ENCODE measurements at regions of chr16 and their contacts with region 1.

Region 1: DNA sequence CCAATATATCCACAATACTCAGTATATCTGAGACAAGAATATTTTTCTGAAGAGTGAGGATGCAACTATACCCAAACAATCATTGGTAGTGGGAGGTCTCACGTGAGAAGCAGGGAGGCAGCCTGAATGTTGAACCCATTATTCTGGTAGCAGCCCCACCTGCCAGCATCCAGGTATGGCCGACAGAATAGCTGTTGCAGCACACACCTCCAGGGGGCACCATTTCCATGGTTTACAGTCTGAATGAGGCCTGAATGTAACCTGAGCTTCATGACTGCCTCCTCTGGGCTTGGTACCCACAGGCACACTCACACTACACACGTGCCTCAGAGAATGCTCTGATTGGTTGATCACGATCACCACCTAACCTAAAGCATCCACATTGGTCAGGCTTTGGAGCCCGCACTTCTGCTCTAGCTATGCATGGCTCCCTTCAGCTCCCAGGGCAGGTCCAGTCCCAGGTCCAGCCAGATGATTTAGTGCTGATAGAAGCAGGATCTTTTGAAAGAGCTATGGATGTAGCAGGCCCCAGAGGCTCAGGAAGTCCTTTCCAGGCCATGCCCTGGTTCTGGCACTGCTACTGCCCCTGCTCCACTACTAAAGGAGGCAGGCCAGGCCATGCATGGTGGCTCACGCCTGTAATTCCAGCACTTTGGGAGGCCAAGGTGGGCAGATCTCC is 11.0 kb upstream of the CBFB start:
- DNase-seq: peak; percentile 80
- ATAC-seq: peak; percentile 74
- H3K4me3 ChIP-seq: no peak overlapping the region
- H3K4me3 Mint-ChIP-seq: no peak overlapping the region
- H3K27ac ChIP-seq: no peak overlapping the region
- H3K27ac Mint-ChIP-seq: no peak overlapping the region
- H3K4me1 ChIP-seq: peaks cover 12 to 13% of the 10 kb centered on the region in 2 donors
- H3K4me1 Mint-ChIP-seq: peaks cover 2% of the 10 kb centered on the region
- H3K27me3 ChIP-seq: peaks cover 0 to 15% (median 7%) of the 10 kb centered on the region in 4 experiments
- H3K27me3 Mint-ChIP-seq: peaks cover 5% of the 10 kb centered on the region
- CTCF ChIP-seq: peak; percentile 53

Region 2: DNA sequence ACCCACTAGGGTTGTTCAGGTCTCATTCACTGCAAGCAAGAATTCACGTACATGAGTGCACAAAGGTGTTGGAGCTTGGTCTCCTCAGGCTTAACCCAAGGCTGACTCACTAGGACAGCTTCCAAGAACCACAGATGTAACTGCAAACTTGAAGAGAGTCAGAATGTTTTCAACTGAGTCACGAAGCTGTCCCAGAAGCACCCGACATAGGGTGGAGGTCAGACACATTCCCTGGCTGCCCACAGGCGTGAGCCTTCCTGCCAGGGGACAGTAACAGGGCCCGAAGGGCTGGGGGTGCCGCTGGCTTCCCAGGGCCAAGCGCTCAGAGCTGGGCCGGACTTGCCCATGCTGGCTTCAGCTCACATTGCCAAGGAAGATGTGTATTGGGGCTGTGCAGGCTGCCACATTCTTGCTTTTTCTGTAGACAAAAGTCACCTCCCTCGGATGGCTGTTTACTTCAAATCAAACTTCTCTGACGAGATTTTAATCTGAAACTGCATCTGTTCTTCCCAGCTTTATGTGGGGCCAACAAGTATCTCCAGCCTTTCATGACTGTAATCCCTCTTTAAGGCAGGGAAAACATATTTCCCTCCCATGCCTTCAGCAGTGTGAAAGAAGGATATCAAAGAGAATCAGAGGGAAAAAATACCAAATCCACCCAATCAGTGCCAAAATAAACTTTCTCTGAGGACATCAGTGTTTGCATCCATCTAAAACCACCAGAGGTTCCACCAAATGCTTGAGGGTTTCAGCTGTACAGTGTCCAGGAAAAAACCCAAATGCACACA is 399.2 kb before region 1 on chr16:
- CTCF ChIA-PET with region 1: no interaction called
- POLR2A ChIA-PET with region 1: no interaction called
- intact Hi-C with region 1: no loop called
- DNase-seq: no peak
- ATAC-seq: no peak
- H3K4me3 ChIP-seq: no peak overlapping the region
- H3K4me3 Mint-ChIP-seq: no peak overlapping the region
- H3K27ac ChIP-seq: no peak overlapping the region
- H3K27ac Mint-ChIP-seq: no peak overlapping the region
- H3K4me1 ChIP-seq: no peaks in the 10 kb centered on the region
- H3K4me1 Mint-ChIP-seq: no peaks in the 10 kb centered on the region
- H3K27me3 ChIP-seq: peaks cover 0 to 9% (median 5%) of the 10 kb centered on the region in 4 experiments
- H3K27me3 Mint-ChIP-seq: peaks cover 40% of the 10 kb centered on the region
- CTCF ChIP-seq: no peak

Region 3: GRCh38 chr16:67028555-67029248 is 10.8 kb after region 1 on chr16 and contains the start of gene CBFB:
- CTCF ChIA-PET with region 1: interaction called, 10 read pairs
- POLR2A ChIA-PET with region 1: interaction called, 4 read pairs
- intact Hi-C with region 1: loop called (anchors 2 kb)
- DNase-seq: peak; percentile 97
- ATAC-seq: peak; percentile 83
- H3K4me3 ChIP-seq: peak within 1 kb of the TSS; percentile 69 to 82 (median 76)
- H3K4me3 Mint-ChIP-seq: peak within 1 kb of the TSS; percentile 94
- H3K27ac ChIP-seq: peak within 1 kb of the TSS; percentile 96 to 98
- H3K27ac Mint-ChIP-seq: peak within 1 kb of the TSS; percentile 94
- H3K4me1 ChIP-seq: peaks cover 13 to 18% of the 10 kb centered on the region in 2 donors
- H3K4me1 Mint-ChIP-seq: peaks cover 40% of the 10 kb centered on the region
- H3K27me3 ChIP-seq: no peaks in the 10 kb centered on the region
- H3K27me3 Mint-ChIP-seq: no peaks in the 10 kb centered on the region
- CTCF ChIP-seq: peak; percentile 21
- total RNA-seq, gene CBFB: 89.0 and 101 TPM in 2 replicates

Region 4: GRCh38 chr16:67100569-67101310 is 82.8 kb after region 1 on chr16:
- CTCF ChIA-PET with region 1: interaction called, 14 read pairs
- POLR2A ChIA-PET with region 1: no interaction called
- intact Hi-C with region 1: loop called (anchors 2 kb)
- DNase-seq: peak; percentile 34
- ATAC-seq: no peak
- H3K4me3 ChIP-seq: no peak overlapping the region
- H3K4me3 Mint-ChIP-seq: no peak overlapping the region
- H3K27ac ChIP-seq: no peak overlapping the region
- H3K27ac Mint-ChIP-seq: no peak overlapping the region
- H3K4me1 ChIP-seq: peaks cover 10 to 12% of the 10 kb centered on the region in 2 donors
- H3K4me1 Mint-ChIP-seq: peaks cover 16% of the 10 kb centered on the region
- H3K27me3 ChIP-seq: no peaks in the 10 kb centered on the region
- H3K27me3 Mint-ChIP-seq: no peaks in the 10 kb centered on the region
- CTCF ChIP-seq: no peak

Region 5: GRCh38 chr16:67198238-67198734 is 180.3 kb after region 1 on chr16:
- CTCF ChIA-PET with region 1: no interaction called
- POLR2A ChIA-PET with region 1: no interaction called
- intact Hi-C with region 1: no loop called
- DNase-seq: peak; percentile 51
- ATAC-seq: peak; percentile 39
- H3K4me3 ChIP-seq: no peak overlapping the region
- H3K4me3 Mint-ChIP-seq: no peak overlapping the region
- H3K27ac ChIP-seq: no peak overlapping the region
- H3K27ac Mint-ChIP-seq: peak overlapping the region; percentile 37
- H3K4me1 ChIP-seq: peaks cover 7 to 10% of the 10 kb centered on the region in 2 donors
- H3K4me1 Mint-ChIP-seq: peaks cover 24% of the 10 kb centered on the region
- H3K27me3 ChIP-seq: no peaks in the 10 kb centered on the region
- H3K27me3 Mint-ChIP-seq: no peaks in the 10 kb centered on the region
- CTCF ChIP-seq: peak; percentile 28